ENCODE measurements at regions of chr16 and their contacts with region 1.

Region 1: DNA sequence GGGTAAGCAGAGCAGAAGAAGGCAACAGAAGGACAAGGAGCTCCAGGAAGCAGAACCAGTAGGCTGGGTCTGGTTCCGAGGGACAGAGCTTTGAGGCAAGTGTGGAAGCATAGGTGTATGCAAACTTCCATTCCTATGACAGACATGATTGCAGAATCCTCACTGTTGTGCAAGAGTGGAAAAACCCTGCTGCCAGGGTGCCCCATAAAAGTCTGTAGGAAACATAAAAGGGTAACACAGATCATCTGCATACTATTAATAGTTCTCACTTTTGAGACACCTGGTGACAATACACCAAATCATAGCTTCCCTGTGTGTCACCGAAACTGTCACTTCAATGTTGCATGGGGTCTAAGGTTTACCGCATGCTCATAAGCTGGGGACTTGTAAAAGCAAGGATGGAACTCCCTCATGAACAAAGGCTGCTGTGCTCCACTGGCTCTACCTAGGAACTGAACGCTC is 39.7 kb downstream of the ARHGAP17 start:
- DNase-seq: no peak
- H3K4me3 ChIP-seq: no peak overlapping the region
- H3K27ac ChIP-seq: no peak overlapping the region
- H3K4me1 ChIP-seq: no peaks in the 10 kb centered on the region
- H3K27me3 ChIP-seq: no peaks in the 10 kb centered on the region
- CTCF ChIP-seq: no peak
- POLR2A ChIP-seq: no peak

Region 2: GRCh38 chr16:24869033-24869432 is 106.4 kb before region 1 on chr16:
- intact Hi-C with region 1: loop called (anchors 5 kb)
- DNase-seq: no peak
- H3K4me3 ChIP-seq: no peak overlapping the region
- H3K27ac ChIP-seq: no peak overlapping the region
- H3K4me1 ChIP-seq: no peaks in the 10 kb centered on the region
- H3K27me3 ChIP-seq: no peaks in the 10 kb centered on the region
- CTCF ChIP-seq: no peak
- POLR2A ChIP-seq: no peak